Activated T-helper 2 cell treated with anti-CD3 and anti-CD28 coated beads, Interferon-gamma antibody, Interleukin-2, Interleukin-4, amounts not matched to agents 10 μg/mL and 5 μg/mL and 100 μg/mL, durations not matched to agents 14 hours and 24 hours and 36 hours (primary cell): ENCODE measurements at regions of chr22 and their contacts with region 1.

Region 1: DNA sequence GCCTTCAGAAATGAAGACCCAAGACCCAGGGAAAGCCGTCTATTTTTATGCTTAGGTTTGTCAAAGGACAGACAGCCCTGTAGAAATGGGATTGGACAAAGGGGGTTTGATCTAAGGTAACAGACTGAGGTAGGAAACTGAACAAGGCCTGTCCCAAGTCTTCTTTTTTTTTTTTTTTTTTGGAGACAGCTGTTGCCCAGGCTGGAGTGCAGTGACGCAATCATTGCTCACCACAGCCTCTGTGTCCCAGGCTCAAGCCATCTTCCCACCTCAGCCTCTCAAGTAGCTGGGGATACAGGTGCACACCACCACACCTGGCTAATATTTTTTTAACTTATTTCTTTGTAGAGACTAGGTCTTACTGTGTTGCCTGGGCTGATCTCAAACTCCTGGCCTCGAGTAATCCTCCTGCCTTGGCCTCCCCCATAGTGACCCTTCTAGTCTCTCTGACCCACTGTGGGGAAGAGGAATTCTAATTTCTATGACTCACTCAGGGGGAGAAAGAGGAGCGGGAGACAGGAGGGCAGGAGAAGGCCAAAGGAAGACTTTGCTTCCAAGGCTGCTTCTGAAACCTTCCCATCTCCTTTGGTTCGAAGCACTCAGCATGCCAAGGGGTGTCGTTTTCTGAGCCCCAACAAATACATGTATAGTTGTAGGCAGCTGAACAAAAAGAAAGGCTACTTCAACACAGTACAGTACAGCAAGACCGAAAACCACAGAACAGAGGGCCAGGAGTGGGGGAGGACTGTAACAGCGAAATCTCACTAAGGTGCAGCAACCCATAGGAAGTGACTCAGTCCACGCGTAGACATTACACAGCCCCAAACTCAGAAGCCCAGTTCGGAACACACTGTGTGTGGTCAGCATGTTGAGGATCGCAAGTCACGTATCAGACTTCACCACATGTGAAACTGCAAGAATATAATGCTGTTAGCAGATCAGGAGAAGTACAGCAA is 872 bp downstream of the TMA7B start:
- DNase-seq: peak; percentile 79
- H3K4me3 Mint-ChIP-seq: peak overlapping the region; percentile 76
- H3K27ac Mint-ChIP-seq: peak overlapping the region; percentile 82
- H3K4me1 Mint-ChIP-seq: peaks cover 63% of the 10 kb centered on the region
- H3K27me3 Mint-ChIP-seq: no peaks in the 10 kb centered on the region

Region 2: DNA sequence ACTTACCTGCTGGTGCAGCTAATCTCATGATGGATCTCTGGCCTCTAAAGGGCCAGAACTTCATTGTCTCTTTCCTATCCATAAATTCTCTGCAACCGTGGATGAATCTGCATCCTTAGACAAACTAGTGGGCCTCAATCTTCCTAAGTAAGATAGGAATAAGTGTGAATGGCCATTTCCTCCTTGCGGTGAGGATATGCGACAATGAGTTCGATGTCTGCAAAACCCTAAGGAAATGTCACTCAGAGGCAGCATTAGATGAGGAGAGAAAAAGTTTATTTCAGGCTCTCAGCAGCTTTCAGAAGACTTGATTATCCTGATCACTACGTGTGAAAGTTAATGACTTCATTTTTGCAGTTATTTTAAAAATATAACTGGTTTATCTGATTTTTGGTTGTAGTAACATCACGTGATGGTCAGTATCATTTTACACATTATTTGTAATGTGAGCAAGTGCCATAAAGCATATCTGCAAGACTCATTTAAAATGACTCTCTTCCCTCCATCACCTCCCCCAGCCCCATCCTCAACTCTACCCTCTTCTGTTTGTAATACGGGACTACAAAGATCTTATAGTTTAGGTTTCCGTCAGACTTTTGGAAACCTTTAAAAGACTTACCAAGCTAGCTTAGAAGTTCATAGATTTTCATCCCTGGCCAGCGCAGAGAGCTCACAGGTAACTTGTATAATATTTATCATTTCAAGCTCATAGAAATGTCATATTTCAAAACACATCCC is 50.0 kb before region 1 on chr22:
- intact Hi-C with region 1: loop called (anchors 1 kb)
- DNase-seq: no peak
- H3K4me3 Mint-ChIP-seq: peak overlapping the region; percentile 72
- H3K27ac Mint-ChIP-seq: peak overlapping the region; percentile 88
- H3K4me1 Mint-ChIP-seq: peaks cover 88% of the 10 kb centered on the region
- H3K27me3 Mint-ChIP-seq: no peaks in the 10 kb centered on the region

Region 3: DNA sequence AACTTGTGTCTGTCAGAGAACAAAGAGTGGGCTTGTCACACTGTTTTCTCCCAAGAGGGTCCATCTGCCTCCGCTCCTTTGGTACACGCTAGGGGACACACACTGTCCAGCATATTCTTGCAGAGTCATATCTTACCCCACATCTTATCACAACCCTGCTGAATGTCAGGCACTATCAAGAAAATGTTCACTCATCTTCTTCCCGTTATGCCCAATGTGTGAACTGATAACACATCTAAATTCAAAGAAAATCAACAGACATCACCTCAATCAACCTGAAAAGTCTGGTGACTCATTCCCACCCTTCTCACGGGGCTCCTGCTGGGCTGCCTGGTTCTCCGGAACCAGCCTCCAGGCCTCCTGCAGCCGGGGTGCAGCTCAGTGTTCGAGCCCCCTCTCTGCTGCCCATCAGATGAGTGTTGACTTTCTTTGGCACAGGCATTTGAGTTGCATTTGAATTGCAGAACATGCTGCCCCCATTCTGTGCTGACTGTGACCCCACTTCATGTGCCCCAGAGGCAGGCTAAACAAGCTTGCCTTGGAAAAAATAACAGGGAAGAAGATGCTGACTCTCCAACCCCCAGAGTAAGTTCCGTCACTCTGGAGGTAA is 40.8 kb before region 1 on chr22:
- intact Hi-C with region 1: loop called (anchors 1 kb)
- DNase-seq: peak; percentile 57
- H3K4me3 Mint-ChIP-seq: peak overlapping the region; percentile 74
- H3K27ac Mint-ChIP-seq: peak overlapping the region; percentile 97
- H3K4me1 Mint-ChIP-seq: peaks cover 83% of the 10 kb centered on the region
- H3K27me3 Mint-ChIP-seq: no peaks in the 10 kb centered on the region

Region 4: DNA sequence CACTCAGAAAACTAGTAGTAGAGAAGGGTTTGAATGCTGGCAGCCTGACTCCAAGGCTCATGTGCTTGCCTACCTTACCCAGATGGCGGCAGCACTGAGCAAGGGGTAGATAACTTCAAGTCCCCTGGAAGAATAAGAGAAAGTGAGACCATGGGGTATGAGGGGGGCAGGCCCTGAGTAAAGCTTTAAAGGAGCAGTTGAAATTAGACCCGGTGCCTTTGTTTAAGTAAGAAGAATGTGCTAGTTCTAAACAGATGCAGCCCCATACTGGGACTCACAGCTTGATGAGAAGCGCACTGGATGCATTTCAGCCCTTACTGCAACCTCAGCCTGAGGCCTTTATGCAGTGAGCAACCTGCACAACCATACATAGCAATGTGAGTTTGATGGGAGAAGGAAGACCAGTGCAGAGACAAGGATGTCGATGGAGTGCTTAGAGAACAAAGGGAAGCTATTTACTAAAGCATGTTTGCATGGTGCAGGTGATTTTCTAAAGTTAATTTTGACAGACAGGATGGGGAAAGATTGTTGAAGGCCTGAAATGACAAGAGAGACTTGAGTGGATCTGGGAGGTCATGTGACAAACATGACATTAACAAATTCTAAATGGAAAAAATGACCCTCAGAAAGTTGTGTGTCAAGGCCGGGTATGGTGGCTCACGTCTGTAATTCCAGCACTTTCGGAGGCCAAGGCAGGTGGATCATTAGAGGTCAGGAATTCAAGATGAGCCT is 28.0 kb before region 1 on chr22:
- intact Hi-C with region 1: loop called (anchors 2 kb)
- DNase-seq: peak; percentile 54
- H3K4me3 Mint-ChIP-seq: peak overlapping the region; percentile 75
- H3K27ac Mint-ChIP-seq: peak overlapping the region; percentile 89
- H3K4me1 Mint-ChIP-seq: peaks cover 52% of the 10 kb centered on the region
- H3K27me3 Mint-ChIP-seq: no peaks in the 10 kb centered on the region

Region 5: GRCh38 chr22:39938509-39939111 is 22.5 kb before region 1 on chr22:
- intact Hi-C with region 1: loop called (anchors 2 kb)
- DNase-seq: no peak
- H3K4me3 Mint-ChIP-seq: peak overlapping the region; percentile 18
- H3K27ac Mint-ChIP-seq: peak overlapping the region; percentile 60
- H3K4me1 Mint-ChIP-seq: peaks cover 93% of the 10 kb centered on the region
- H3K27me3 Mint-ChIP-seq: no peaks in the 10 kb centered on the region

Region 6: DNA sequence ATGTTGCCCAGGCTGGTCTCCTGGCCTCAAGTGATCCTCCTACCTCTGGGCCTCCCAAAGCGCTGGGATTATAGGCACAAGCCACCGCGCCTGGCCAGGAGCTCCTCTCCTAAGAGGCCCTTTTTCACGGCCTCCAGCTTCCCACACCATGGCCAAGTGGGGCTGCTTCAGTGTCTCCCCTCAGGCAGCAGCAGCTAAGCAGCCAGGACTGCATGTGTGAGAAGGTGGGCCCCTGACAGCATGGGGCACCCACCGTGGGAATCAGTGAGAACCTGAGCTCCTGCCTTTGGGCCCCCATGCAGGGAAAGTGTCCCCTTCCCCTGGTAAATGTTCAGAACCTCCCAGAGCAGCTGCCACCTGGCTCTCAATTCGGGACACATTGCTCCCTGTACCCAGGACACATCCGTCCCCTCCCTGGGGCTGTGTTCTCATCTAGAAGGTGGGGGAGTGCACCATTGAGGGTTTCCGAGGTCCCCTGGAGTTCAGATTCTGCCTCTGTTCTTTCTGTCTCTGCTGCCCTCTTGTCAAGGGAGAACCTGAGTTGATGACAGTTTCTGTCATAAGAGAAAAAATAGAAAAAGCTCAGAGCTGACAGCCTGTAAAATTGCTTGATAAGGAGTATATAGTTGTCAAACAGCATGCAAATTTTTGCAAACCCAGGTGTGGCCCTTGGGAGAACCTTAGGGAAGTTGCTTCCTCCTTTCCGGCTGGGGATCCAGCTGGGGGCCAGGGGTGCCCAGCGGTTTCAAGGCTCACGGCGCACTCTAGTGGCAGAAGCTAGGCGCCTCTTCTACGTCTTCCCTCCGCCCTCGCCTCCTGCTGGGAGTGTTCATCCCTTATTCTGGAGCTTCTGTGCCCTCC is 63.4 kb after region 1 on chr22:
- intact Hi-C with region 1: no loop called
- DNase-seq: peak; percentile 43
- H3K4me3 Mint-ChIP-seq: no peak overlapping the region
- H3K27ac Mint-ChIP-seq: no peak overlapping the region
- H3K4me1 Mint-ChIP-seq: no peaks in the 10 kb centered on the region
- H3K27me3 Mint-ChIP-seq: no peaks in the 10 kb centered on the region

Region 7: GRCh38 chr22:40121461-40121860 is 160.4 kb after region 1 on chr22:
- intact Hi-C with region 1: no loop called
- DNase-seq: no peak
- H3K4me3 Mint-ChIP-seq: no peak overlapping the region
- H3K27ac Mint-ChIP-seq: no peak overlapping the region
- H3K4me1 Mint-ChIP-seq: peaks cover 25% of the 10 kb centered on the region
- H3K27me3 Mint-ChIP-seq: no peaks in the 10 kb centered on the region